ENCODE measurements at regions of chr1 and their contacts with region 1.

Region 1: DNA sequence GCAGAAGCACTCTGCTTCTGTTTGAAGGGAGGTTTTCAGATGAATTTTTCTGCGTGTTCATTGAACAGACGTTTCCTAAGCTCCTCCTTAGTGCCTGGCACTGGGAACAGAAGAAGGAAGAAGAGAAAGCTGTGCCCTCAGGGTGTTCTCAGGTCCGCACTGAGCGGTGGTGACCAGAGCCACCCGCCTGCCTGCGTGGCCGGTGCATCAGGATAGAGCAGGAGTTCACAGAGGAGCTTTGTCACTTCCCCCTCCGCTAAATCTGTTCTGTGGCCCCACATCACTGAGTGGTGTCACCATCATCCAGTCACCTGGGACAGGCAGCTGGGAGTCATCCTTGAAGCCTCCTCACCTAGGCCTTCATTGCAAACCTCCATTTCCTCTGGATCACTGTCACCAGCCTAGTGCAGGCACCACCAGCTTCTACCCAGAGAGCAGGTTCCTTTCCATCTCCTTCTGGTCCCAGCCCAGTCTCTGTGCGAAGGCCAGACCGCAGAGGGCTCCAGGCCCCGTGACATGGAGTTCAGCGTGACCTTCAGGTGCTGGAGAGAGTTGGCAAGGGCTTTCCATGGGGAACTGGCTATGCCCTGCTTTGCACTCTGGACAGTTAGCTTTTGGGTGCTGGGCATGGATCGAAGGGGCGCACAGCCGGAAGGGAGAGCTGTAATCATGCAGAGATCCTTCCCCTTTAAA is 21.7 kb downstream of the PARK7 start:
- DNase-seq: no peak
- ATAC-seq: no peak
- H3K4me3 ChIP-seq: no peak overlapping the region
- H3K27ac ChIP-seq: no peak overlapping the region
- H3K4me1 ChIP-seq: peaks cover 1% of the 10 kb centered on the region
- H3K27me3 ChIP-seq: no peaks in the 10 kb centered on the region

Region 2: DNA sequence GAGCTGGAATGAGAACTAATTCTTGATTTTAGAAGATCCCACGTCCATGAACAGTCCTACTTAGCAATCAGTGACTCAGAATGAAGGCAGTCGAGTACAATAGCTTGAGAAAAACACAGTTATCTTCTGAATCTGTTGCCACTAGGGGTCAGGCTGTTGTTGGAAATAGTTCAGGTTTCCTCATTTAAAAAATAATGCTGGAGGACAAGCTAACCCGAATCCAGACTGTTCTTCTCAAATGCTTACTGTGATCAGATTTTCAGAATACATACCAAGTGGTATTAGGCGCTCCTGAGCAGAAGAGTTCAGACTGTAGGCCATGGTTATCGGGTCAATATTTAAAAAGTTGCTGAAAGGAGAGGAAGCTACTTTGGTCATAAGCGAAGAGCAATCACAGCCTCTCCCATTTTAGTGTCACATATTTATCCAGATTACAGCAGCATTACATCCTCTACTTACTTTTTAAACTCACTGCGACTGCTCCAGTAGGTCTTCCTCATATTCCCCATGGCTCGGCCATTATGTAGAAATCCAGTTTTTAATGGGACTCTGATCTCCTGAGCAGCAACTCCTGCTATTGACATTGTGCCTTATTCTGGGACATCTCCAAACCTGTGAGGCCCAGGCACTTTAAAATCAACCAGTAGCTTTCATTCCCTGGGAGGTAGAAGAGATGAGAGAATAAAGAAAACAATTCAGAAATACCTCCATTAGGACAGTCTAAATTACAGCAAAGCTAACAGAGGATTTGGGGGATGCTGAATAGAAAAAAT is 32.0 kb after region 1 on chr1:
- intact Hi-C with region 1: loop called in 2 of 4 experiments (anchors 5 kb)
- DNase-seq: no peak
- ATAC-seq: peak; percentile 77 to 84
- H3K4me3 ChIP-seq: peak overlapping the region; percentile 23
- H3K27ac ChIP-seq: peak overlapping the region; percentile 79
- H3K4me1 ChIP-seq: peaks cover 6% of the 10 kb centered on the region
- H3K27me3 ChIP-seq: no peaks in the 10 kb centered on the region

Region 3: DNA sequence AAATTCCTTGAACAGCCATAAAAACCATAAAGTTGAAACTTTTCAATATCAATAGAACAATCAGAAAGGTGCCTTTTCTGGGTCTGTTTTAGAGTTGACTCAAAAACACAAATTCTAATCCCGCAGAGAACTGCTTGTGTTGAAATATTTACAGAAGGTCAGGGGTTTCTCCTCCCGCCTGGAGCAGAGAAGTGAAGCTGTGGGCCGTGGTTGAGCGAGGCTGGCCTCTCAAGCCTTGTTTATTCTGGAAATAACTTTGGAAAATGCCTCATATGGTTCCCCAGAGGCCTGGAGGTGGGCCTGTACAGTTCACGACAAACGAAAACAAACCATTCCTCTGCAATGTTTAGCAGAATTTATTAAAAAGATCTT is 133.6 kb after region 1 on chr1:
- intact Hi-C with region 1: no loop called
- DNase-seq: peak; percentile 71 to 89 (median 86)
- ATAC-seq: peak; percentile 90 to 94
- H3K4me3 ChIP-seq: no peak overlapping the region
- H3K27ac ChIP-seq: peak overlapping the region; percentile 89
- H3K4me1 ChIP-seq: peaks cover 16% of the 10 kb centered on the region
- H3K27me3 ChIP-seq: no peaks in the 10 kb centered on the region